Activated CD4-positive, alpha-beta T cell treated with anti-CD3 and anti-CD28 coated beads for 36 hours (primary cell): ENCODE measurements at regions of chr5 and their contacts with region 1.

Region 1: DNA sequence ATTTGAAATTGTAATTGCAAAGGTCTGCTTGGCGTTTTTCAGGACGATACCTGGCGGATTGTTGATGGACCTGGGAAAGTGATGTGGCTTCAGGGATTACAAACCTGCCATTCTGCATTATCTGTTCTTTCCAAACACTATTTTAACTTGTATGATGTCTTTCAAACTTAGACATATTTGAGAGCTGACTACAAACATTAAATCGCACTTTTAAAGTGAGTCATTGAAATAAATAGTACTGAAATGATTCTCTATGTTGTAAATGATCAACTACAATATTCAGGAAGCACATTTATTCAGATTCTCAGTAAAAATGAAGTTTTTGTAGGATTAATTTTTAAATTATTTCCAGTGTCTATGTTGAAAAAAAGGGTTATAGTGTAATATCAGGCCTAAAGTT is 32.3 kb upstream of the TMEM171 start:
- DNase-seq: no peak
- ATAC-seq: no peak
- H3K4me3 Mint-ChIP-seq: no peak overlapping the region
- H3K27ac Mint-ChIP-seq: no peak overlapping the region
- H3K4me1 Mint-ChIP-seq: no peaks in the 10 kb centered on the region
- H3K27me3 Mint-ChIP-seq: peaks cover 11% of the 10 kb centered on the region

Region 2: GRCh38 chr5:72988769-72989168 is 99.3 kb before region 1 on chr5:
- CTCF ChIA-PET with region 1: no interaction called
- POLR2A ChIA-PET with region 1: no interaction called
- intact Hi-C with region 1: no loop called
- DNase-seq: no peak
- ATAC-seq: no peak
- H3K4me3 Mint-ChIP-seq: no peak overlapping the region
- H3K27ac Mint-ChIP-seq: no peak overlapping the region
- H3K4me1 Mint-ChIP-seq: peaks cover 4% of the 10 kb centered on the region
- H3K27me3 Mint-ChIP-seq: peaks cover 22% of the 10 kb centered on the region

Region 3: DNA sequence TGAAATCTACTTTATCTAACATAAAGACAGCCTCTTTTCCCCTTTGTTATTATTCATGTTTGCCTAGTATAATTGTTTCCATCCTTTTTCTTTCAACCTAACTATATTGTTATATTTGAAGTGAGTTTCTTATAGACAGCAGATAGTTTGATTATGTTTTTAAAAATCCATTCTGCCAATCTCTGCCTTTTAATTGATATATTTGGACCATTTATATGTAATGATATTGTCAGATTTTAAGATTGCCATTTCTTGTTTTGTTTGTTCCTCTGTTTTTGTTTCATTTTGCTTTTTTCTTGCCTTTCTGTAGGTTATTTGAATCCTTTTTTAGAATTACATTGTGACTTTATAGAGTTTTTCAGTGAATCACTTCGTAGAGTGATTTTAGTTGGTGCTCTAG is 42.4 kb before region 1 on chr5:
- CTCF ChIA-PET with region 1: no interaction called
- POLR2A ChIA-PET with region 1: no interaction called
- intact Hi-C with region 1: no loop called
- DNase-seq: no peak
- ATAC-seq: no peak
- H3K4me3 Mint-ChIP-seq: no peak overlapping the region
- H3K27ac Mint-ChIP-seq: no peak overlapping the region
- H3K4me1 Mint-ChIP-seq: no peaks in the 10 kb centered on the region
- H3K27me3 Mint-ChIP-seq: no peaks in the 10 kb centered on the region

Region 4: DNA sequence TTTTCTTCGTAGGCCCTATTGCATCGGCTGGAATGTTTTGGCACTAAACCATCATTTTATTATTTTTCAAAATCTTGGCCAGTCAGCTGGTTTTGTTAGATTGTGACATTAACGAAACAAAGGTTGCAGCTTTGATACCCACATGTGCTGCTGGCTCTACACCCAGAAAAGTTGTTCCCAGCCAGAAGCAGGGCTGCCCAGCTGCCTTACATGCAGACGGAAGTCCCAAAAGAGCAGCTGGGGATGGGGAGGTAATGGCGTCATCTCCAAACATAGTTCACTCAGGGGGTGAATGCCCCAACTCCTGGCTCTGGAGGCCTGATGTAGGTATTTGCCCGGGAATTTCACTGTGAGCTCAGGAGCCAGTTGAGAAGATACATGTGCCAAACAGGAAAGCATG is 55.7 kb after region 1 on chr5:
- CTCF ChIA-PET with region 1: no interaction called
- POLR2A ChIA-PET with region 1: no interaction called
- intact Hi-C with region 1: no loop called
- DNase-seq: no peak
- ATAC-seq: no peak
- H3K4me3 Mint-ChIP-seq: no peak overlapping the region
- H3K27ac Mint-ChIP-seq: no peak overlapping the region
- H3K4me1 Mint-ChIP-seq: no peaks in the 10 kb centered on the region
- H3K27me3 Mint-ChIP-seq: peaks cover 68% of the 10 kb centered on the region

Region 5: GRCh38 chr5:73170522-73170921 is 82.5 kb after region 1 on chr5:
- CTCF ChIA-PET with region 1: interaction called, 12 read pairs
- POLR2A ChIA-PET with region 1: no interaction called
- intact Hi-C with region 1: no loop called
- DNase-seq: peak; percentile 43
- ATAC-seq: peak; percentile 57
- H3K4me3 Mint-ChIP-seq: no peak overlapping the region
- H3K27ac Mint-ChIP-seq: no peak overlapping the region
- H3K4me1 Mint-ChIP-seq: no peaks in the 10 kb centered on the region
- H3K27me3 Mint-ChIP-seq: peaks cover 88% of the 10 kb centered on the region

Region 6: DNA sequence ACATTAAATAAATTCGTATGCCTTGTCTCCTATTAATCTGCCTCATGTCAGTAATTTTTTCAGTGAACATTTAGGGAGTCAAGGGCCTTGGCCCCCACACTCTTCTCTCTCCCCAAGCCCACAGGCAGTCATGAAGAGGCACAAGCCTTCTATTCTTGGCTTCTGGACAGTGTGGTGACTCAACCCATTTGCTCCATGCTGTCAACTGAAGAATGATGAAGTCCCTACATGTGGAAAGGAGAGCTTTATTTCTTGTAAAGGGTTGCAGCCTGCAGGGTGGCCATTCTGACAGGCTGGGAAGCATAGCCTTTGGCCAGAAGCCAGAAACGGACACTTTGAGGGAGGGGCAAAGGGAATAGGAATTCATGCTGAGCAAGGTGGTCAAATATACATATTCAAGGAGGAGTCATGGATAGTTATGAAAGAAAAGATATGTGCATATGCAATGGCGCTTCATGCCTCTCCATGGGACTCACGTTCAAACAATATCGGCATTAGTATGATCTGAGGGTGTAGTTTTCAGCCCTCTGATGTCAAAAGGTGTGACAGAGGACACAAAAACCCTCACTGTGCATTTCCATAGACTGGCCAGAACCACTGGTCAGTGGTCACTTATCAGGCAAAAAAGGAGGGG is 446.1 kb after region 1 on chr5:
- CTCF ChIA-PET with region 1: interaction called, 6 read pairs
- POLR2A ChIA-PET with region 1: no interaction called
- intact Hi-C with region 1: loop called in 1 of 2 experiments (anchors 10 kb)
- DNase-seq: no peak
- ATAC-seq: no peak
- H3K4me3 Mint-ChIP-seq: no peak overlapping the region
- H3K27ac Mint-ChIP-seq: no peak overlapping the region
- H3K4me1 Mint-ChIP-seq: no peaks in the 10 kb centered on the region
- H3K27me3 Mint-ChIP-seq: peaks cover 16% of the 10 kb centered on the region